SK-N-SH (cell line): ENCODE measurements at regions of chr1 and their contacts with region 1.

Region 1: DNA sequence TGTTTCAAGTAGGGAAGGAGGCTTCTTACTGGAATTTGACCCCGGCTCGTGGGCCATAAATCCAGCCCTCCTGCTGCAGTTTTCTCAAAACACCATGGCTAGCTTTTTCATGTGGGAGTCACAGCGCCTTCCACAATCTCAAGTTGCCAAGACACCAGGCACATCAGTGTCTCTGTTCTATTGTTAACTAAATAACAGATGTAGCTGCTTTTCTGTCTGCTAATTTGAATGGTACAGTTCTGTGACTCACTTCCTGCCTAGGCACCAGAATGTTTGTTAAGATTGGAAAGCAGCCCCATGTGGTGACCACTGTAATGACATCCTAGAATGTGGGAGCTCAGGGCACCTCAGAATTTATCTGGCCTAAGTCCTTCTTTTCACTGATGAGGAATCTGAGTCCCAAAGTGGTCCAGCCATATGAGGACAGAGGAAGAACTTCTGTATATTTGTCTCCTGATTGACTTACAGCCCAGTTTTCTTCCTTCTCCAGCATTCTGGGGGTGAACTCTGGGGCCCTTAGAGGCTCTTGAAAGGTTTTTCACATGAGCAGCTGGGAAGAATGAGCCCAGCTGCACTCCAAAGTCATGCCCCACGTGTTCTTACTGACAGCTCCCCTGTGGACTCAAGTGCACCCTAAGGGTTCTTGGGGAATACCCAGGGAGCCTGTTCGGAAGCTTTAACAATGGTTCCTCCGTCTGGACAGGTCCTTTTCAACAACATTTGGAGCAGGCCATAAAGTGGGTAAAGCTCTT is 27.5 kb downstream of the TRIM45 start:
- DNase-seq: peak; percentile 23
- H3K4me3 ChIP-seq: no peak overlapping the region; a peak in 1 of 4 replicates
- H3K27ac ChIP-seq: peak overlapping the region; percentile 87 to 98
- H3K4me1 ChIP-seq: peaks cover 6 to 54% of the 10 kb centered on the region in 2 experiments
- H3K27me3 ChIP-seq: no peaks in the 10 kb centered on the region
- CTCF ChIP-seq: peak; percentile 53
- EP300 ChIP-seq: 0 out of 4 replicates have a peak, but pooled peaks of 1 of the 2 experiments have one; percentile 27
- RAD21 ChIP-seq: no peak

Region 2: GRCh38 chr1:117045644-117046043 is 48.4 kb before region 1 on chr1:
- CTCF ChIA-PET with region 1: no interaction called
- POLR2A ChIA-PET with region 1: no interaction called
- DNase-seq: no peak
- H3K4me3 ChIP-seq: no peak overlapping the region
- H3K27ac ChIP-seq: no peak overlapping the region
- H3K4me1 ChIP-seq: no peaks in the 10 kb centered on the region
- H3K27me3 ChIP-seq: no peaks in the 10 kb centered on the region
- CTCF ChIP-seq: no peak
- EP300 ChIP-seq: no peak
- RAD21 ChIP-seq: no peak

Region 3: GRCh38 chr1:117067533-117068370 is 26.3 kb before region 1 on chr1:
- CTCF ChIA-PET with region 1: interaction called, 17 read pairs
- POLR2A ChIA-PET with region 1: no interaction called
- DNase-seq: peak; percentile 70
- H3K4me3 ChIP-seq: no peak overlapping the region; a peak in 1 of 4 replicates
- H3K27ac ChIP-seq: no peak overlapping the region
- H3K4me1 ChIP-seq: no peaks in the 10 kb centered on the region
- H3K27me3 ChIP-seq: no peaks in the 10 kb centered on the region
- CTCF ChIP-seq: peak; percentile 89
- EP300 ChIP-seq: no peak
- RAD21 ChIP-seq: peak; percentile 97

Region 4: GRCh38 chr1:117079737-117080136 is 14.3 kb before region 1 on chr1:
- CTCF ChIA-PET with region 1: no interaction called
- POLR2A ChIA-PET with region 1: no interaction called
- DNase-seq: no peak
- H3K4me3 ChIP-seq: no peak overlapping the region
- H3K27ac ChIP-seq: no peak overlapping the region
- H3K4me1 ChIP-seq: 0 out of 4 replicates have a peak, but pooled peaks cover 0 to 6% of the 10 kb centered on the region in 2 experiments
- H3K27me3 ChIP-seq: no peaks in the 10 kb centered on the region
- CTCF ChIP-seq: no peak
- EP300 ChIP-seq: no peak
- RAD21 ChIP-seq: no peak

Region 5: GRCh38 chr1:117121776-117122697 is 28.0 kb after region 1 on chr1:
- CTCF ChIA-PET with region 1: interaction called, 14 read pairs
- POLR2A ChIA-PET with region 1: no interaction called
- DNase-seq: peak; percentile 95
- H3K4me3 ChIP-seq: peak overlapping the region; percentile 66 to 80
- H3K27ac ChIP-seq: peak overlapping the region; percentile 88 to 92
- H3K4me1 ChIP-seq: peaks cover 4 to 10% of the 10 kb centered on the region in 2 experiments; a peak in 2 of 4 replicates
- H3K27me3 ChIP-seq: no peaks in the 10 kb centered on the region
- CTCF ChIP-seq: peak; percentile 87
- EP300 ChIP-seq: no peak
- RAD21 ChIP-seq: peak; percentile 62